ENCODE measurements at regions of chr12 and their contacts with region 1.

Region 1: DNA sequence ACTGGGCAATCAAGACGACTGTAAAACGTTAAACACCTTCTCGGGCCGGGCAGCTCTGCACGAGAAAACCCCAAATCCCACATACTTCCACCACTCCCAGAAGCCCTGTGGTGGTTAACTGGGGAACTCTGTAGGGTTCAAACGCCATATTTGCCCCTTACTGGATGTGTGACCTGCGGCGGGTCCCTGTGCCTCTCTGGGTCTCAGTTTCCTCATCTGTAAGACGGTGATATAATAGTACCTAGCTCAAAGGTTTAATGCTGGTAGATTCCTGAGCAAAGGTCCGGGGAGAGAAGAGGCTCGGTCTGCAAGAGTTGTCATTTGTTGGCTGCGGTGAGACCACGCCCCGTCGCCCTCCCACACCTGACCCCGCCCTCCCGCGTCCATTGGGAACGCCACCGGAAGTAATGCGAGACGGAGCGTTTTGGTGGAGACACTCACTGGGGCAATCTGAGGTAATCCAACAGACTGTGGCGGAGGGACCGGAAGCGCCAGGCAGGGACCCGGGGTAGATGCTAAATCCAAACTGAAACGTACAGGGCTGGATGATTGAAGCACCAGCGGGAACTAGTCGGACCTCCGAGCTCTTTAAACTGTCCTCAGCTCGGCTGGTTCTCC is 661 bp upstream of the OGFOD2 start:
- DNase-seq: peak; percentile 92
- ATAC-seq: peak; percentile 92
- H3K4me3 ChIP-seq: peak overlapping the region; percentile 95 to 98
- H3K27ac ChIP-seq: peak overlapping the region; percentile 98
- H3K4me1 ChIP-seq: peaks cover 15% of the 10 kb centered on the region
- H3K27me3 ChIP-seq: no peaks in the 10 kb centered on the region
- CTCF ChIP-seq: no peak

Region 2: DNA sequence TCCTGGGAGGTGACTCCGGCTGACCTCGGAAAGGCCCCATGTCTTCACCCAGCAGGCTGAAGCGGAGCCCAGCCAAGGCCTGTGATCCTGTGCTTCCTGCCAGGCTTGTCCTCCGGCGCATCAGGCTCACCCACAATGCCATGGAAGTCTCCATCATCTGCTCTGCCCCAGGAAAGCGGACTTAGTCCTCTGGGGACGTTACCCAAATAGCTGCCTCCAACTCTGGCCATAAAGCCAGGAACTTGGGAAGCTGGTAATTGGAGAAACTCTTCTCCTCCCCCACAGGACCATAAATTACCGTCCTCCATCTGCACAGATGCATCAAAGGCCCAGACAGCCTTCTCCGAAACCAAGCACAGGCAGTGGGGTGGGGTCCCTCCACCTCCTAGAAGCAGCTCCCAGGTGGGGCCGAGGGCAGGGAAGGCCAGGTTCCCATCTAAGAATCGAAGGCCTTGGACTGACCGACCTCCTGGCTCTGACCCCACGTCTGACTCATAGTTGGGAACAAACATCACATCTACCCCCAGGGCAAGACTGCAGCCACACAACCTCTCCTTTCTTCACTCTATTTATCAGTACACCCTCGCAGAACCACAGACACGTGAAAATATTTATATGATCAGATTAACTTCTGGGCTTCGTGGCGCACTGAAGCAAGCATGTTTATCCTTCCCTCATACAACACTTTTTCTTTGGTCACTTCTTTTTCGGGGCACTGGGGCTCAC is 120.1 kb after region 1 on chr12:
- CTCF ChIA-PET with region 1: interaction called, 14 read pairs
- POLR2A ChIA-PET with region 1: no interaction called
- in situ Hi-C with region 1: no loop called
- intact Hi-C with region 1: no loop called
- DNase-seq: peak; percentile 51
- ATAC-seq: peak; percentile 92
- H3K4me3 ChIP-seq: peak overlapping the region in 1 of 2 experiments; percentile 14; a peak in 1 of 4 replicates
- H3K27ac ChIP-seq: peak overlapping the region; percentile 91
- H3K4me1 ChIP-seq: peaks cover 55% of the 10 kb centered on the region
- H3K27me3 ChIP-seq: no peaks in the 10 kb centered on the region
- CTCF ChIP-seq: no peak